ENCODE measurements at regions of chr7 and their contacts with region 1.

Region 1: GRCh38 chr7:29636009-29636351 is 72.3 kb downstream of the PRR15 start:
- DNase-seq: no peak
- H3K4me3 ChIP-seq: no peak overlapping the region
- H3K27ac ChIP-seq: no peak overlapping the region
- H3K4me1 ChIP-seq: no peaks in the 10 kb centered on the region
- H3K27me3 ChIP-seq: no peaks in the 10 kb centered on the region
- CTCF ChIP-seq: peak; percentile 4; the same call in 1 of the 2 replicates
- EP300 ChIP-seq: no peak
- RAD21 ChIP-seq: no peak

Region 2: DNA sequence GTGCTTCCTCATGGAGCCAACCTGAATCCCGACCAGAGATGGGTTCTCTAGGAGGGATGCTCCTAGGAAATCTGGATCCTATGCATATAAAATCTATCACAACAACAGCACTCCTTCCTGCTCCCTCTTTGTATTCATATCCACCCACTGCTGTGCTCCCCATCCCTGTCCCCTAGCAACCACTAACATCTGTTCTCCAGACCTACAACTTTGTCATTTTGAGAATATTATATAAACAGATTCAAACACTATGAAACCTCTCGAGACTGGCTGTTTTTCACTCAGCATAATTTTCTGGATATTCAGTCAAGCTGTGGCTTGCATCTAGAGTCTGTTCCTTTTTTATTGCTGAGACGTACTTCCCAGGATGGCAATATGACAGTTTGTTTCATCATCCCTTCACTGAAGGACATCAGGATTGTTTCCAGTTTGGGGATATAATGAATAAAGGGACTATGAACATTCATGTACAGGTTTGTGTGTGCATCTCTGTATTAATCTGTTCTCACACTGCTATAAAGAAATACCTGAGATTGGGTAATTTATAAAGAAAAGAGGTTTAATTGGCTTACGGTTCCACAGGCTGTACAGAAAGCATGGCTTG is 108.4 kb before region 1 on chr7:
- CTCF ChIA-PET with region 1: no interaction called
- POLR2A ChIA-PET with region 1: no interaction called
- DNase-seq: no peak
- H3K4me3 ChIP-seq: no peak overlapping the region
- H3K27ac ChIP-seq: no peak overlapping the region
- H3K4me1 ChIP-seq: no peaks in the 10 kb centered on the region
- H3K27me3 ChIP-seq: no peaks in the 10 kb centered on the region
- CTCF ChIP-seq: no peak
- EP300 ChIP-seq: no peak
- RAD21 ChIP-seq: no peak

Region 3: DNA sequence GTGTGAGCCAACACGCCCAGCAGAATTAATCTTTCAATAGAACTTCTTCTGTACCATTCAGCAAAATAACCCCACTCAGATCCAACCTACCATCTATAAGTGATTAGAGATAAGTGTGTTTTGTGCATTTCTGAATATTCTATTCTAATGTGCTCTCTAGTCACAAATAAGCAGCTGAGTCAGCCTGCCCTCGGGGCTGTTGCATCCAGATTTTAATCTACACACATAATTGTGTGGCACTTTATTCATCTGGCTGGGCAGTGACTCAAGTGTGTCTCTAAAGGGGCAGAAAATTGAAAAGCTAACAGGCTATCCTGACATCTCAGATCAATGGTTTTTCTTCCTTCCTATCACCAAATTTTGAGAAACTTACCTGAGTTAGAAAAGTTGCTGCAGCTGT is 12.0 kb before region 1 on chr7:
- CTCF ChIA-PET with region 1: interaction called, 25 read pairs
- POLR2A ChIA-PET with region 1: no interaction called
- DNase-seq: no peak
- H3K4me3 ChIP-seq: no peak overlapping the region
- H3K27ac ChIP-seq: no peak overlapping the region
- H3K4me1 ChIP-seq: peaks cover 8 to 20% of the 10 kb centered on the region in 2 experiments
- H3K27me3 ChIP-seq: no peaks in the 10 kb centered on the region
- CTCF ChIP-seq: no peak
- EP300 ChIP-seq: peak in 1 of 2 experiments; percentile 20; a peak in 1 of 4 replicates
- RAD21 ChIP-seq: no peak

Region 4: GRCh38 chr7:30396389-30396788 is 760.4 kb after region 1 on chr7:
- CTCF ChIA-PET with region 1: no interaction called
- POLR2A ChIA-PET with region 1: no interaction called
- DNase-seq: peak; percentile 17
- H3K4me3 ChIP-seq: no peak overlapping the region
- H3K27ac ChIP-seq: no peak overlapping the region
- H3K4me1 ChIP-seq: no peaks in the 10 kb centered on the region
- H3K27me3 ChIP-seq: no peaks in the 10 kb centered on the region
- CTCF ChIP-seq: no peak
- EP300 ChIP-seq: no peak
- RAD21 ChIP-seq: peak; percentile 67

Measured in SK-N-SH (cell line).